Activated naive CD4-positive, alpha-beta T cell treated with anti-CD3 and anti-CD28 coated beads for 36 hours (primary cell): ENCODE measurements at regions of chr3 and their contacts with region 1.

Region 1: DNA sequence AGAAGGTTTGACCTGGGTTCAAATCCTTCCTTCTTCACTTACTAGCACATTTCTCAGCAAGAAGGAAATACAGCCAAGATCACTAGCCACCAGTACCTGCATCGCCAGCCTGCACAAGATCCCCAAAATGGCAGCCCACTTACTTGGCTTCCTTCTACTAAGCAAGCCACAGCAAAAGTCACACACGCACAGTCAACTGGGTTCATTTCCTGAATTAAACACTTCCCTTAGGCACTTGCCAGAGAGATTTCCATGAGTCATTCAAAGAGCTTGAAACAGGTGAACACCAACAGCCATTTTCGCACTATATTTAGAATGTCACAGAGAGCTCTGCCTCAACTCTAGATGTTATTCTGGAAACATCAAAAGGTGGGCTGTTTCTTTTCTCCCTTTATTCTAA is 42.6 kb downstream of the MGLL start:
- DNase-seq: peak; percentile 46
- H3K4me3 Mint-ChIP-seq: no peak overlapping the region
- H3K27ac Mint-ChIP-seq: no peak overlapping the region
- H3K4me1 Mint-ChIP-seq: peaks cover 6% of the 10 kb centered on the region
- H3K27me3 Mint-ChIP-seq: no peaks in the 10 kb centered on the region

Region 2: DNA sequence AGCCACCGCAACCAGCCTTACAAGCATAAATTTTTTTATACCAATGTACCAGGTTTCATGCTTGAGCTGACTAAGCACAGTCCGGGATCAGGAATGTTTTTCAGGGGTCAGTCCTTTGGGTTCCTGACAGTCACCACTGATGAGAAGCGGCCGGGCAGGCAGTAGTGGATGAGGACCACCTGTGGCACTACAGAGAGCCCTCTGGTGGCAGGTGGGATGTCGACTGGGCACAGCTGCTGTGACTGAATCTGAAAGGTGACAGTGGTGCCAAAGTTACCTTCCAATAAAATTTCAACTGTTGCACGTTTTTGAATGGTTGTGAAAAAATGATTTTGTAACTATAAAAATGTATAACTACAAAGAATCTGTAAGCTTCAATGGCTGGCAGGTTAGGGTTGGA is 223.2 kb before region 1 on chr3:
- CTCF ChIA-PET with region 1: no interaction called
- intact Hi-C with region 1: no loop called
- DNase-seq: no peak
- H3K4me3 Mint-ChIP-seq: no peak overlapping the region
- H3K27ac Mint-ChIP-seq: no peak overlapping the region
- H3K4me1 Mint-ChIP-seq: peaks cover 7% of the 10 kb centered on the region
- H3K27me3 Mint-ChIP-seq: no peaks in the 10 kb centered on the region

Region 3: GRCh38 chr3:127754411-127755304 is 25.1 kb before region 1 on chr3:
- CTCF ChIA-PET with region 1: no interaction called
- intact Hi-C with region 1: loop called (anchors 2 kb)
- DNase-seq: peak; percentile 58
- H3K4me3 Mint-ChIP-seq: no peak overlapping the region
- H3K27ac Mint-ChIP-seq: no peak overlapping the region
- H3K4me1 Mint-ChIP-seq: peaks cover 29% of the 10 kb centered on the region
- H3K27me3 Mint-ChIP-seq: peaks cover 1% of the 10 kb centered on the region

Region 4: GRCh38 chr3:127959846-127960245 is 180.1 kb after region 1 on chr3:
- CTCF ChIA-PET with region 1: no interaction called
- intact Hi-C with region 1: no loop called
- DNase-seq: peak; percentile 12
- H3K4me3 Mint-ChIP-seq: no peak overlapping the region
- H3K27ac Mint-ChIP-seq: no peak overlapping the region
- H3K4me1 Mint-ChIP-seq: no peaks in the 10 kb centered on the region
- H3K27me3 Mint-ChIP-seq: no peaks in the 10 kb centered on the region